Motor neuron (in vitro differentiated cells): ENCODE measurements at regions of chr22 and their contacts with region 1.

Region 1: DNA sequence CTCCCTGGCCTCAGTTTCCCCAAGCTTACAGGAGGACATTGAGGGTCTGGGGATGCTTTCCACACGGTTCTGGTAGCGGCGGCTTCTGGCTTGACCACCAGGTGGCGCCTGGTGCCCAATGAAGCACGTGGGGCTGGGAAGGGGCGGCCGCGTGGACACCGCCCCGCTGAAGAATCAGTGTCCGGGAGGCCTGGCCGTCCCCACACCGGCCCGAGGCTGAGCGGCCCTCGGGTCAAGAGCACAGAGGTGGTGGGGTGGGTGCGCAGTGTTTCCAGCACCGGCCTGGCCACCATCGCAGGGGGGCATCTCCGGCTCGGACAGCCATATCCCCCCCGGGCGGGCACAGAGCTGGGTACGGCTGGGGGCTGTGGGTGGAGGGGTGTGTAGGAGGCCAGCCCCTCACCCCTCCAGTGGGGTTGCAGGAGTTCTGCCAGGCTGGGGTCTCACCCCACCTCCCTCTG is 27.8 kb upstream of the PPARA start:
- ATAC-seq: peak; percentile 45 to 76 (median 68)
- H3K4me3 ChIP-seq: no peak overlapping the region
- H3K27ac ChIP-seq: no peak overlapping the region
- H3K4me1 ChIP-seq: peaks cover 0 to 5% of the 10 kb centered on the region in 2 donors

Region 2: GRCh38 chr22:46309526-46310085 is 187.1 kb after region 1 on chr22:
- in situ Hi-C with region 1: loop called in 6 of 9 experiments (anchors 5 to 25 kb)
- ATAC-seq: no peak
- H3K4me3 ChIP-seq: no peak overlapping the region
- H3K27ac ChIP-seq: no peak overlapping the region
- H3K4me1 ChIP-seq: no peaks in the 10 kb centered on the region

Region 3: DNA sequence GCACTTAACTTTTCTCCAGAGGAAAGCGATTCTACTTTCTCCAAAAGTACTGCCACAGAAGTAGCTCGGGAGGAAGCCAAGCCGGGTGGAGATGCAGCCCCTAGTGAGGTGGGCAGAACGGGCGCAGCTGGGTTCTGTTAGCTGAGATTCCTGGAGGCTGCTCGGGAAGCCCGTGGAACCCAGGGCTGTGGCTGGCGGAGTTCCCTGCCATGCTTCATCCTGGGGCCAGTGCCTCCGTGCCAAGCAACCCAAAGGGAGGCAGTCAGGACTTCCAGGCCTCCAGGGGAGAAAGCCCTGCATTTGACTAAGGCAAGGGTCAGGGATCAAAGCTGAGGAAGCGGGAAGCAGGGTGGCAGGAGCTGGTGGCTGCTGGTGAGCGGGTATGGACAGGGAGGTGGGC is 206.2 kb after region 1 on chr22:
- in situ Hi-C with region 1: loop called in 3 of 9 experiments (anchors 10 to 25 kb)
- ATAC-seq: no peak
- H3K4me3 ChIP-seq: no peak overlapping the region
- H3K27ac ChIP-seq: no peak overlapping the region
- H3K4me1 ChIP-seq: no peaks in the 10 kb centered on the region

Region 4: GRCh38 chr22:46845296-46846149 is 723.0 kb after region 1 on chr22:
- in situ Hi-C with region 1: no loop called
- ATAC-seq: peak in 7 of 8 experiments; percentile 9 to 78 (median 66)
- H3K4me3 ChIP-seq: no peak overlapping the region
- H3K27ac ChIP-seq: no peak overlapping the region
- H3K4me1 ChIP-seq: peaks cover 16 to 17% of the 10 kb centered on the region in 2 donors